Left ventricle myocardium superior (tissue), 1 donor: ENCODE measurements at regions of chr18 and their contacts with region 1.

Region 1: GRCh38 chr18:29874519-29875098 is 1167.9 kb downstream of the DSC3 start:
- DNase-seq: no peak
- ATAC-seq: no peak

Region 2: DNA sequence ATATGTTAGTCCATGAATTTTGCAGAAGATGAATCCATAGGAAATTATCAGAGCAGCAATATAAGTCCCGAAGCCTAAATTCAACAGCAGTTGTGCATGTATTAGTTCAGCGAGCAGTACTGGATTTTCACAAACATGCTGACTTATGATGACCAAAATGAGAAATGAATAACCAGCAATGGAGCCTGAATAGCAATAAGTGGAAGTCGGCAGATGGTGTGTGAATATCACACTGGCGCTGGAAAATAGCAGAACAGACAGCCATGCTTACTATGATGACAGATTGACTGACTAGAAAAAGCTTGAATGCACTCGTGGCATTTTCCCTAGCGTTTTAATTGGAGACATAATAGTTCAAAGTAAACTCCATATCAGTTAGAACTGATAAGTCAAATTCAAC is 53.5 kb after region 1 on chr18:
- intact Hi-C with region 1: loop called (anchors 10 kb)
- DNase-seq: no peak
- ATAC-seq: no peak